Breast epithelium (tissue), 4 donors: ENCODE measurements at regions of chr6 and their contacts with region 1.

Region 1: GRCh38 chr6:117791012-117791411 is 115.7 kb downstream of the NUS1 start:
- DNase-seq: no peak
- H3K4me3 ChIP-seq: no peak overlapping the region
- H3K27ac ChIP-seq: no peak overlapping the region
- H3K4me1 ChIP-seq: no peaks in the 10 kb centered on the region
- H3K27me3 ChIP-seq: no peaks in the 10 kb centered on the region
- CTCF ChIP-seq: no peak
- POLR2A ChIP-seq: no peak

Region 2: DNA sequence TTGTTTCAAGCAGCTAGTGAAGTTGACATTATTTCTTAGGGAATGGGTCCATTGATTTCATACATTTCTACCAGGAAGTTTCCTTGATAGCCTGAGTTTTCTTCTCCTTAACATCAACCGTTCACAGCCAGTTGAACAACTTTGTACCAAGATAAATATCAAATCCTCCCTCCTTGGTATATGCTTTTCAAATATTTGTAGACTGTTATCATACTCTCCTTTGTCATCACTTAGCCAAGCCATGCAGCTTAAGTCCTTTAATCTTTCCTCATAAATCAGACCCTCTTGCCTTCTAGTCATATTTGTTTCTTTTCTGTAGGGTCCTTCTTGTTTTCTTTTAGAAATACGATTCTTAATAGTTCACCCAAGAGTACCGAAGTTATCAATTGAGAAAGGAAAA is 888.4 kb before region 1 on chr6:
- intact Hi-C with region 1: no loop called
- DNase-seq: no peak
- H3K4me3 ChIP-seq: no peak overlapping the region
- H3K27ac ChIP-seq: no peak overlapping the region
- H3K4me1 ChIP-seq: no peaks in the 10 kb centered on the region
- H3K27me3 ChIP-seq: no peaks in the 10 kb centered on the region
- CTCF ChIP-seq: no peak
- POLR2A ChIP-seq: no peak

Region 3: DNA sequence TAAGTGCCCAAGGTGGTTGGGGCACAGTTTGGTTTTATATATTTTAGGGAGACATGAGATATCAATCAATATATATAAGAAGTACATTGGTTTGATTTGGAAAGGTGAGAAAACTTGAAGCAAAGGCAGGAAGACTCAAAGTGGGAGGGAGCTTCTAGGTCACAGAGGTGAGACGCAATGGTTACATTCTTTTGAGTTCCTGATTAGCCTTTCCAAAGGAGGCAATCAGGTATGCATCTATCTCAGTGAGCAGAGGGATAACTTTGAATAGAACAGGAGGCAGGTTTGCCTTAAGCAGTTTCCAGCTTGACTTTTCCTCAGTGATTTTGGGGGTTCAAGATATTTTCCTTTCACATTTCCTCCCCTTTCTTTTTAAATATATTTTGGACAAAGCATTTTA is 58.1 kb after region 1 on chr6:
- intact Hi-C with region 1: no loop called
- DNase-seq: no peak
- H3K4me3 ChIP-seq: no peak overlapping the region
- H3K27ac ChIP-seq: no peak overlapping the region
- H3K4me1 ChIP-seq: no peaks in the 10 kb centered on the region
- H3K27me3 ChIP-seq: no peaks in the 10 kb centered on the region
- CTCF ChIP-seq: no peak
- POLR2A ChIP-seq: no peak

Region 4: GRCh38 chr6:118042855-118043254 is 251.8 kb after region 1 on chr6:
- intact Hi-C with region 1: loop called (anchors 5 kb)
- DNase-seq: no peak
- H3K4me3 ChIP-seq: no peak overlapping the region
- H3K27ac ChIP-seq: no peak overlapping the region
- H3K4me1 ChIP-seq: no peaks in the 10 kb centered on the region
- H3K27me3 ChIP-seq: no peaks in the 10 kb centered on the region
- CTCF ChIP-seq: no peak
- POLR2A ChIP-seq: no peak